ENCODE measurements at regions of chr1 and their contacts with region 1.

Region 1: DNA sequence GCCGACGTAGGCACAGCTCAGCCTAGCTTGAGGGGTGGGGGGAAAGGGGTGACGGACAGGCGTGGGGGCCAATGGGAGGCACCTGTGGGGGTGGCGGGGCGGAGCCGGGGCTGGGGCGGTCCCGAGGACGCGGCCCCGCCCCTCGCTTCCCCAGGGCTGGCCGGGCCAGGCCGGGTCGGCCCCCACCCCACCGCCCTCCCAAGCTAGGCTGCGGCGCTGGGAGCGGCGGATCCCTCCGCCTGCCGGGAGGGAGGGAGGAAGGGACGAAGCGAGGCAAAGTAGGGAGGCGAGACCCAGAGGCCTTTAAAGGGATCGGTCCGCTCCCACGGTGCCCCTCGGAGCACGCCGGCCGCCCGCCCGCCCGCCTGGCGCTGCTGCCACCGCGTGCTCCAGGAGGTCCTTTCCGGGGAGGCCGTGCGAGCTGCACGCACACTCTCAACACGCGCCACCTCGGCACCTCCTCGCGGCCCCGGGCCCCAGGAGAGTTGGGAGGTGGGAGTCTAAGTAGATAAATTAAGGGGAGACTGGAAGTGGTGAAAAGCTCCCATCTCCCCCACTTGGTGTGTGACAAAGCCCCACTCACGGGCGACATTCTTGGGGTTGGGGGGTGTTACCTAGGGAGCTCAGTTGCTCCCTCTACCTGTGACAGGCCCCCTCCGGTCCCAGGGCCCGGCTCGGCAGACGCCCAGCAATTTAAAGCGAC is 373 bp upstream of the MEF2D start:
- DNase-seq: peak; percentile 87
- H3K4me3 Mint-ChIP-seq: peak overlapping the region; percentile 90
- H3K27ac Mint-ChIP-seq: peak overlapping the region; percentile 91
- H3K4me1 Mint-ChIP-seq: peaks cover 78% of the 10 kb centered on the region
- H3K27me3 Mint-ChIP-seq: no peaks in the 10 kb centered on the region

Region 2: GRCh38 chr1:156198831-156199349 is 302.1 kb before region 1 on chr1:
- intact Hi-C with region 1: loop called (anchors 5 kb)
- DNase-seq: no peak
- H3K4me3 Mint-ChIP-seq: peak overlapping the region; percentile 78
- H3K27ac Mint-ChIP-seq: peak overlapping the region; percentile 94
- H3K4me1 Mint-ChIP-seq: peaks cover 60% of the 10 kb centered on the region
- H3K27me3 Mint-ChIP-seq: no peaks in the 10 kb centered on the region

Region 3: GRCh38 chr1:156298852-156299357 is 202.0 kb before region 1 on chr1 and contains the start of gene VHLL:
- intact Hi-C with region 1: no loop called
- DNase-seq: no peak
- H3K4me3 Mint-ChIP-seq: no peak within 1 kb of the TSS
- H3K27ac Mint-ChIP-seq: no peak within 1 kb of the TSS
- H3K4me1 Mint-ChIP-seq: peaks cover 15% of the 10 kb centered on the region
- H3K27me3 Mint-ChIP-seq: no peaks in the 10 kb centered on the region
- total RNA-seq, gene VHLL: 0.56 TPM in 1 of 2 replicates, not detected in the other

Region 4: DNA sequence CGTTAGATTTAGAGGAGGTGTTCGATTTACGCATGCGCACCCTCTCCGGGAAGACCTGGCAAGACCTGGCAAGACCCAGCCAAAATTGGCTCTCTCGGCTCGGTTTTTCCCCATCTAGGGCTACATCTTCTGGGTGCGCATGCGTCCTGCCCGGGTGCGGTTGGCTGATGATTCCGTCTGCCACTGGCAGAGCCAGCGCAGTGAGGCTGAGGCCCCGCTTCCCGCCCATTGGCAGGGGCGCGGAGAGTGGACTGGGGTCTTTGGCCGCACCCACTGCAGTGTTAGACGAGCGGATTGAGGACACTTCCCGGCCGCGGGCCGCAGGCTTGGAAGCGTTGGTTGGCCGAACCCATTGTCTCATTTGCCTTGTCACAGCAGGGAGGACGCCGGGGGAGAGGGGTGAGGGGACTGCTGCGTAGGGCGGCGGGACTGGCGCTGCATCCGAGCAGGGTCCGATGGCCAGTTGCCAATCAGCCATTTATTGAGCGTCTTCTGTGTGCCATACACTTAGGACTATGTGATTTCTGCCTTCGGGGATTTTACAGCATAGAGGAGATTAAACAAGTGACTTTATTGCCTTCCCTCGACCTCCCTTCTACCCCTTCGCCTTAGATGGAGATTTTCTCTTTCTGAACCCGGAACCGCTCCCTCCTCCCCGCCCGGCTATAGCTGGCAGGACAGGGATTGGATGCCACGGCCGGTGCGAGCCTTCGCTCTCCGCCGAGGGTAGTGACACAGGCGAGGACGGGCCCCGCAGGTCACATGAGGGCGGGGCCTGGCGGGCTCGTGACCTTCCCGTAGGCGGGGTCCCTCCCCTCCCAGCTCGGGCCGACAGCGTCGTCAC is 44.1 kb before region 1 on chr1:
- intact Hi-C with region 1: loop called (anchors 1 kb)
- DNase-seq: peak; percentile 92
- H3K4me3 Mint-ChIP-seq: peak overlapping the region; percentile 89
- H3K27ac Mint-ChIP-seq: peak overlapping the region; percentile 98
- H3K4me1 Mint-ChIP-seq: peaks cover 14% of the 10 kb centered on the region
- H3K27me3 Mint-ChIP-seq: peaks cover 5% of the 10 kb centered on the region

Region 5: DNA sequence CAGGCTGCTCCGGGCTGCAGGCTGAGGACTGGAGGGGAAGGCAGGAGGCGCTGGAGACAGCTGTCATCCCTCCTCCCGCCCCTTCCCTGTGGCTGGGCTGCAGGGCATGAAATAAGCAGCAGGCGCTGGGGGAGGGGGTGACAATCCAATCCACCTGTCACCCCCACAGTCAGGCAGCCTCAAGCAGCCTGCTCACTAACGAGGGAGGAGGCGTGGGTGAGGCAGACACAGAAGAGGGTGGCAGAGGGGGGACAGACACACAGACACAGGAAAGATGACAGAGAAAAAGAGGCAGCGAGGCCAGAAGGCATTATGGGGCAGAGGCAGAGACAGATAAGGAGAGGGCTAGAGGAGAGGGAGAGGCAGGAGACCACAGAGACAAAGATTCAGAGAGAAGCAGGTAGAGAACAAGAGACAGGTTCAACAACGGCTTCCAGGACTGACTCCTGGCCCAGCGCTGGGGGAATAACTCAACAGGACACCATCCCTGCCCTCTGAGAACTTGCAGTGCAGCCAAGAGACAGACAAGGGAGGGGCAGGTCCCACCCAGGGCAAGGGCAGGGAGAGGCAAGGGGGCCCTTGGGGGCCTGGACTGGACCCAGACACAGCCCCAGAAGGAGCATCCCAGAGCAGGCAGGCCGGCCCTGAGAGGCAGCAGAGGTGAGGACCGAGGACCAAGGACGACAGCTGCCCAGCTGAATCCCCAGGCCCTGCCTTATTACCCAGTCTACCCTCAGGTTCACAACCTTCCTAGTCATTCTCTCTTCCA is 11.6 kb before region 1 on chr1:
- intact Hi-C with region 1: loop called (anchors 1 kb)
- DNase-seq: no peak
- H3K4me3 Mint-ChIP-seq: peak overlapping the region; percentile 65
- H3K27ac Mint-ChIP-seq: peak overlapping the region; percentile 88
- H3K4me1 Mint-ChIP-seq: peaks cover 77% of the 10 kb centered on the region
- H3K27me3 Mint-ChIP-seq: no peaks in the 10 kb centered on the region

Region 6: DNA sequence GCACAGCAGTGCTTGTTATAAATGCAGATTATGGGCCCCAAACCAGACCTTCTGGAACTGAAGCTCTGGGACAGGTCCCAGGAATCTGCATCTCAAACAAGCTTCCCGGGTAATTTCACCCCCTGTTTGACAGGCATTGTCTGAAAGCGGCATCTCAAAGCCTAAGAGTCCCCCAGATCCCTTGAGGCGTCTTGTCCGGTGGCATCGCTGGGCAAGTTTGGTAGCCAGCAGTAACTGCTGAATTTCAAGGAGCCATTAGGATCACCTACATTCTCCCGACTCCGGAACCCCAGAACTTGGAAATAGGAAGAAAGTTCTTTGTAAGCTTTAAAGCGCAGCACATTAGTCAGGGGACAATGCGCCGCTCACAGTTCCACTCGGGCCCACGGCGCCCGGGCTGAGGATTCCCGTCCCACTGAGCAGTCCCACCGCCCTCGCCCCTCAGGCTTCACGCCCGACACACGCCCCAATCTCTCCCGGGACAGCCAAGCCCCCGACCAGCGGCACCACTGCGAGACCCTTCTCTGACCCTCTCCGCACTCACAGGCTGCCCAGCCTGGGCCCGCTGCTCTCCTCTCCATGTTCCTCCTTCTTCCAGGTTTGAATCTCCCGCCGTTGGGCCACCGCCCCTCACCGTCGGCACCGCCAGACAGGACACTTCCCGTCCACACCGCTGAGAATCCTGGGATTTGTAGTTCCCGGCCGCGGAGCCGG is 71.2 kb after region 1 on chr1 and contains the start of gene IQGAP3:
- intact Hi-C with region 1: loop called (anchors 5 kb)
- DNase-seq: peak; percentile 74
- H3K4me3 Mint-ChIP-seq: peak within 1 kb of the TSS; percentile 96
- H3K27ac Mint-ChIP-seq: peak within 1 kb of the TSS; percentile 76
- H3K4me1 Mint-ChIP-seq: peaks cover 28% of the 10 kb centered on the region
- H3K27me3 Mint-ChIP-seq: peaks cover 18% of the 10 kb centered on the region
- total RNA-seq, gene IQGAP3: 10.3 and 11.2 TPM in 2 replicates

Region 7: GRCh38 chr1:156740679-156741612 is 240.0 kb after region 1 on chr1 and contains the start of gene MRPL24:
- intact Hi-C with region 1: loop called (anchors 5 kb)
- DNase-seq: peak; percentile 97
- H3K4me3 Mint-ChIP-seq: peak within 1 kb of the TSS; percentile 93
- H3K27ac Mint-ChIP-seq: peak within 1 kb of the TSS; percentile 94
- H3K4me1 Mint-ChIP-seq: peaks cover 54% of the 10 kb centered on the region
- H3K27me3 Mint-ChIP-seq: no peaks in the 10 kb centered on the region
- total RNA-seq, gene MRPL24: 132 and 135 TPM in 2 replicates

Region 8: DNA sequence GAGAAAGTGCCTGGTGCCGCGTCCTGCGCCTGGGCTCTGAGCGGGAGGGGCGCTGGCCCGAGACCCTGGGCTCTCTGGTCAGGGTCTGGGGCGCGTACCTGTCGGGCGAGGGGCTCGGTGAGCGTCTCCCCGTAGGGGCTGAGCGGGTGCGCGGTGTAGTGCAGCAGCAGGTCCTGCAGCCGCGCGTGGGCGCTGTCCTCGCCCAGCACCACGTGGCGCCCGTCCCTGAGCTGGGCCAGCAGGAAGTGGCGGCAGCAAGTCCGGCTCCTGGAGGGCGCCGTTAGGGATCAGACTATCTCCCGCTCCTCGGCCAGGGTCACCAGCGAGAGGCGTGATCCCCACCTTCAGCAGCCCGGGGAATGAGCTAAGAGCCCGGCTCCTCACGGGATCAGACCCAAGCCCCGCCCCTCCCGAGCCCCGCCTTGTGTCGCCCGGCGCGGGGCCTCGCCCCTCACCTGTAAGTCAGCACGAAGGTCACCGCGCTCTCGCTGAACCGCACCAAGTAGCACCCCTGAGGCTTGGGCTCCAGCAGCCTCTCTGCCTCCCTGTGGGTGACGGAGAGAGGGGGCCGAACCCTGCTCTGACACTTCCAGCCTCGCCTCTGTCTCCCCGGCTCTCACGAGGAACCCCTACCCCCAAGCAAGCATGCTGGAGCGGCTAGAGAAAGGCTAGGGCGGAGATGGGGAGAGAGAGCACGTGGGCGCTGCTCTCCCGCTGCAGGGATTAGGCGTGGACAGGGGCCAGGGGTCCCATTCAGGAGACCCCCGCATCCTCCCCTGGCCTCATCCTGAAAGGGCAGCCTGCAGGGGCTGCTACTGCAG is 313.0 kb after region 1 on chr1:
- intact Hi-C with region 1: loop called (anchors 5 kb)
- DNase-seq: peak; percentile 68
- H3K4me3 Mint-ChIP-seq: peak overlapping the region; percentile 85
- H3K27ac Mint-ChIP-seq: peak overlapping the region; percentile 100
- H3K4me1 Mint-ChIP-seq: peaks cover 75% of the 10 kb centered on the region
- H3K27me3 Mint-ChIP-seq: no peaks in the 10 kb centered on the region